ENCODE measurements at regions of chr9 and their contacts with region 1.

Region 1: GRCh38 chr9:130107234-130107861 is 53.6 kb downstream of the GPR107 start:
- DNase-seq: peak; percentile 85
- ATAC-seq: peak; percentile 80
- H3K4me3 ChIP-seq: no peak overlapping the region
- H3K4me3 Mint-ChIP-seq: no peak overlapping the region
- H3K27ac ChIP-seq: no peak overlapping the region
- H3K27ac Mint-ChIP-seq: peak overlapping the region; percentile 42
- H3K4me1 ChIP-seq: no peaks in the 10 kb centered on the region
- H3K4me1 Mint-ChIP-seq: peaks cover 11% of the 10 kb centered on the region
- H3K27me3 ChIP-seq: no peaks in the 10 kb centered on the region
- H3K27me3 Mint-ChIP-seq: no peaks in the 10 kb centered on the region
- CTCF ChIP-seq: peak; percentile 89

Region 2: GRCh38 chr9:128947422-128948301 is 1159.7 kb before region 1 on chr9 and contains the starts of genes DOLK and NUP188:
- CTCF ChIA-PET with region 1: no interaction called
- POLR2A ChIA-PET with region 1: no interaction called
- intact Hi-C with region 1: no loop called
- DNase-seq: peak; percentile 98
- ATAC-seq: peak; percentile 86
- H3K4me3 ChIP-seq: peak within 1 kb of the TSS; percentile 64 to 95 (median 84)
- H3K4me3 Mint-ChIP-seq: peak within 1 kb of the TSS; percentile 97
- H3K27ac ChIP-seq: peak within 1 kb of the TSS; percentile 91 to 96
- H3K27ac Mint-ChIP-seq: peak within 1 kb of the TSS; percentile 98
- H3K4me1 ChIP-seq: peaks cover 15 to 18% of the 10 kb centered on the region in 2 donors
- H3K4me1 Mint-ChIP-seq: peaks cover 27% of the 10 kb centered on the region
- H3K27me3 ChIP-seq: no peaks in the 10 kb centered on the region
- H3K27me3 Mint-ChIP-seq: no peaks in the 10 kb centered on the region
- CTCF ChIP-seq: no peak
- total RNA-seq, gene DOLK: 11.1 and 12.2 TPM in 2 replicates
- total RNA-seq, gene NUP188: 83.6 and 93.2 TPM in 2 replicates

Region 3: DNA sequence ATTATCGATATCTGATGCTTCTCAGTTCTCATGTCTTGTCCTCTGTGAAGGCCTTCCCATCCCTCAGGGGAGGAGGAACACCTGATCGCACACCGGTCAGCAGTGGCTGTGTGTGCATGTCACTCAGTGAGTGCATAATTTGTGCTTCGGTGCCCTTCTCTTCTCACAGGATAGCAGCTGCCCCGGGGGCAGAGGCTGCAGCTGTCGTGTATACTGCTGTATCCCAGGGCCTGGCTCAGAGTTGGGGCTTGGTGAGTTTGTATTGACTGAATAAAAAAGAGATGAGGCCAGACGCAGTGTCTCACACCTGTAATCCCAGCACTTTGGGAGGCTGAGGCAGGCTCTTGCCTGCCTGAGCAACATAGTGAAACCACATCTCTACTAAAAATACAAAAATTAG is 15.1 kb after region 1 on chr9:
- CTCF ChIA-PET with region 1: interaction called, 34 read pairs
- POLR2A ChIA-PET with region 1: interaction called, 5 read pairs
- intact Hi-C with region 1: no loop called
- DNase-seq: no peak
- ATAC-seq: no peak
- H3K4me3 ChIP-seq: no peak overlapping the region
- H3K4me3 Mint-ChIP-seq: no peak overlapping the region
- H3K27ac ChIP-seq: no peak overlapping the region
- H3K27ac Mint-ChIP-seq: no peak overlapping the region
- H3K4me1 ChIP-seq: peaks cover 8 to 14% of the 10 kb centered on the region in 2 donors
- H3K4me1 Mint-ChIP-seq: peaks cover 21% of the 10 kb centered on the region
- H3K27me3 ChIP-seq: no peaks in the 10 kb centered on the region
- H3K27me3 Mint-ChIP-seq: no peaks in the 10 kb centered on the region
- CTCF ChIP-seq: no peak

Region 4: DNA sequence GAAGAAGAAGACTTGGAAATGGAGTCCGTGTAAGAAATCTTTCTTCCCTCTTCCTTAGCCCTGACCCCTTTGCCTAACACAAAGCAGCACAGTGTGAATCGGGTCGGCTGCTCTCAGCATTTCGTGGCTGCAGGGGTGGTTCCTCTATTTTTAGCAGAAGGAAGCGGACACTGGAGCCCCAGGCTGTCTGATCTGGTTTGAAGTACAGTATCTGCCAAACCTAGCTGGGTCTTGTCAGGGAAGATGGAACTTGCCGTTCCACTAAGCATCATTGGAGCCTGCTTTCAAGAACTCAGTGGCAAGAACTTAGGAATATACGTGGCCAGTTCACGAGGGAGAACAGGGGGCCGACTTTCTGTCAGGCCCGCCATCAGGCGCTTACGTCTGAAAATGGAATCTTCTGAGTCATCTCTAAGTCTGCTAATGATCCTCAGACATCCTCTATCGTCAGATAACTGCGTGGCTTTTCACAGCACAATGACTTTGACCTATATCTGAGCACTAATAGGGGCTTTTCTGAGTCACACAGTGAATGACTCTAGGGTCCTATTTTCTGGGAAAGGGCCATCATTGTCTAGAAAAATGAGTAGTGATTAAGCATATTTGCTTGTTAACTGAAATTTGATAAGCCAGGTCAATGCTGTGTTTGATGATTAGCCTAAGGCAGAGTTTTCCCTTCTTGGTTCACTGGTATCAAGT is 21.5 kb after region 1 on chr9:
- CTCF ChIA-PET with region 1: interaction called, 34 read pairs
- POLR2A ChIA-PET with region 1: interaction called, 3 read pairs
- intact Hi-C with region 1: loop called (anchors 2 kb)
- DNase-seq: peak; percentile 79
- ATAC-seq: peak; percentile 79
- H3K4me3 ChIP-seq: peak overlapping the region in 4 of 5 experiments; percentile 6 to 41 (median 30)
- H3K4me3 Mint-ChIP-seq: peak overlapping the region; percentile 82
- H3K27ac ChIP-seq: peak overlapping the region; percentile 81 to 96
- H3K27ac Mint-ChIP-seq: peak overlapping the region; percentile 97
- H3K4me1 ChIP-seq: peaks cover 32 to 37% of the 10 kb centered on the region in 2 donors
- H3K4me1 Mint-ChIP-seq: peaks cover 41% of the 10 kb centered on the region
- H3K27me3 ChIP-seq: no peaks in the 10 kb centered on the region
- H3K27me3 Mint-ChIP-seq: no peaks in the 10 kb centered on the region
- CTCF ChIP-seq: no peak

Region 5: GRCh38 chr9:130167927-130168326 is 60.6 kb after region 1 on chr9:
- CTCF ChIA-PET with region 1: interaction called, 4 read pairs
- POLR2A ChIA-PET with region 1: no interaction called
- intact Hi-C with region 1: loop called (anchors 10 kb)
- DNase-seq: no peak
- ATAC-seq: no peak
- H3K4me3 ChIP-seq: no peak overlapping the region
- H3K4me3 Mint-ChIP-seq: no peak overlapping the region
- H3K27ac ChIP-seq: no peak overlapping the region
- H3K27ac Mint-ChIP-seq: no peak overlapping the region
- H3K4me1 ChIP-seq: peaks cover 4 to 5% of the 10 kb centered on the region in 2 donors
- H3K4me1 Mint-ChIP-seq: no peaks in the 10 kb centered on the region
- H3K27me3 ChIP-seq: peaks cover 0 to 14% (median 7%) of the 10 kb centered on the region in 4 experiments
- H3K27me3 Mint-ChIP-seq: peaks cover 31% of the 10 kb centered on the region
- CTCF ChIP-seq: no peak

Region 6: DNA sequence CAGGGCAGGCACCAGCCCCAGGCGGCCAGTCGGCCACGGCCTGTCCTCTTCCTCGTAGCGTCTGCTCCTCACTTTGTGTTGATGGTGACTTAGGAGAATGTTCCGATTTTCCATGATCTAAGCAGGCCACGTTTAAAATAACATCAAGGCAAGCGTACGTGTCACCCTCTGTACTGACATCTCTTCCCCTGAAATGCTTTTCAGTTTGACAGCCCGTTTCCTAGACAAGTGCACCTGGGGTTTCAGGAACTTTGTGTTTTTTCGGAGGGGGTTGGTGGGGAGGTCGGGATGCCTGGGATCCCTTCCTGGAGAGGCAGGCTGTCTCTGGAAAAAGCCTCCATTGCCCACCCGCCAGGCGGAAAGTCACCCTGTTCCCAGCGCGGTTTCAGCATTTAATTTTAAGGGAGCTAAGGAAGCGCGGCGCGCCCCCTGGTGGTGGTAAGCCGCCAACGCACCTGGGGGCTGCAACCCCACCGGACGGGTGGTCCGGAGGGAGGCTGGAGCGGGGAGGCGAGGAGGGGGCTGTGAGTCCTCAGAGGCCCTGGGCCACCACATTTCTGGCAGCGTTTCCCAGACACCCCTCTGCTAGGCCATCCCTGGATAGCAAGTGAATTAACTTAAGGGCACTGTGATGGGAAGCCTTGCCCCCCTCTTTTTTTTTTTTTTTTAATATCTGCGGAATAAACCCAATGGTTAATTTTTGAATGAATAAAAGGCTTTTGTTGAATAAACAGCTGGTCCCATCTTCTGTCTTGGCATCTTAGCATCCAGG is 128.7 kb after region 1 on chr9:
- CTCF ChIA-PET with region 1: interaction called, 191 read pairs
- POLR2A ChIA-PET with region 1: no interaction called
- intact Hi-C with region 1: loop called (anchors 1 kb)
- DNase-seq: peak; percentile 79
- ATAC-seq: no peak
- H3K4me3 ChIP-seq: no peak overlapping the region
- H3K4me3 Mint-ChIP-seq: peak overlapping the region; percentile 23
- H3K27ac ChIP-seq: no peak overlapping the region
- H3K27ac Mint-ChIP-seq: peak overlapping the region; percentile 15
- H3K4me1 ChIP-seq: peaks cover 18 to 28% of the 10 kb centered on the region in 2 donors
- H3K4me1 Mint-ChIP-seq: peaks cover 28% of the 10 kb centered on the region
- H3K27me3 ChIP-seq: peaks cover 0 to 12% (median 0%) of the 10 kb centered on the region in 4 experiments
- H3K27me3 Mint-ChIP-seq: peaks cover 3% of the 10 kb centered on the region
- CTCF ChIP-seq: peak; percentile 97

Region 7: DNA sequence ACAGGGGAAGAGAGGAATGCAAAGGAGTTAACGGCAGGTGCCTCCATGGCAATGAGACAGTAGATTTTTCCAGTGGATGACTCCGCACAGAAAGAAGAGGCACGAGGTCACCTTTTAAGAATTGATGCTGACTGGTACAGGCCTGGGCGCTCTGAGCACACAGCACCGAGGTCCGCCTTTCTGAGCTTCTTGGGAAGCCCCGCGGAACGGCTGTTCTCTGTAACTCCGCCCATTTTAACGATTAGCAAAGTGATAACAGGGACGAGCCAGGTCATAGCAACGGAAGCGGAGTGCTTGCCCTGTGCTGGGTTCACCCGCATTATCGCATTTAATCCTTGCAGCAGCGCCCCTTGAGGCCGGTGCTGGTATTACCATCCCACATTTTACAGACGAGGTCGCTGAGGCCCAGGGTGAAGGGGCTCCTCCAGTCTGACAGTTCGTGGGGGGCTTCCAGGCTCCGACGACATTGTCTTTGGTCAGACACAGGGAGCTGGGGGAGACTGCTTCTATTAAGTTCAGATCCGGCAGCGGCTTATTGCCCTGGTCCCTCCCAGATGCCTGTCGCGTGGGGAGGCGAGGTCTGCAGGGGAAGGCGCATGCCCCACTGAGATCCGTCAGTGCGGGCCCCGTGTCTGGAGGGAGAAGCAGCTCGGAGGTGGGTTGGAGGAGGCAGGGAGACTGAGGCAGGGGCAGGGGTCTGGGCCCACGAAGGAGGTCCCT is 135.8 kb after region 1 on chr9:
- CTCF ChIA-PET with region 1: interaction called, 191 read pairs
- POLR2A ChIA-PET with region 1: no interaction called
- intact Hi-C with region 1: no loop called
- DNase-seq: peak; percentile 79
- ATAC-seq: peak; percentile 55
- H3K4me3 ChIP-seq: peak overlapping the region in 1 of 5 experiments; percentile 21
- H3K4me3 Mint-ChIP-seq: peak overlapping the region; percentile 44
- H3K27ac ChIP-seq: no peak overlapping the region
- H3K27ac Mint-ChIP-seq: no peak overlapping the region
- H3K4me1 ChIP-seq: peaks cover 24 to 29% of the 10 kb centered on the region in 2 donors
- H3K4me1 Mint-ChIP-seq: peaks cover 29% of the 10 kb centered on the region
- H3K27me3 ChIP-seq: peaks cover 0 to 5% (median 0%) of the 10 kb centered on the region in 4 experiments
- H3K27me3 Mint-ChIP-seq: peaks cover 11% of the 10 kb centered on the region
- CTCF ChIP-seq: peak; percentile 89

Measured in B cell (primary cell).